Mammary epithelial cell (primary cell): ENCODE measurements at regions of chr7 and their contacts with region 1.

Region 1: GRCh38 chr7:104914421-104914820 is 99.6 kb upstream of the KMT2E start:
- DNase-seq: no peak
- H3K4me3 ChIP-seq: no peak overlapping the region
- H3K27ac ChIP-seq: no peak overlapping the region
- H3K4me1 ChIP-seq: no peaks in the 10 kb centered on the region
- H3K27me3 ChIP-seq: no peaks in the 10 kb centered on the region
- CTCF ChIP-seq: no peak

Region 2: DNA sequence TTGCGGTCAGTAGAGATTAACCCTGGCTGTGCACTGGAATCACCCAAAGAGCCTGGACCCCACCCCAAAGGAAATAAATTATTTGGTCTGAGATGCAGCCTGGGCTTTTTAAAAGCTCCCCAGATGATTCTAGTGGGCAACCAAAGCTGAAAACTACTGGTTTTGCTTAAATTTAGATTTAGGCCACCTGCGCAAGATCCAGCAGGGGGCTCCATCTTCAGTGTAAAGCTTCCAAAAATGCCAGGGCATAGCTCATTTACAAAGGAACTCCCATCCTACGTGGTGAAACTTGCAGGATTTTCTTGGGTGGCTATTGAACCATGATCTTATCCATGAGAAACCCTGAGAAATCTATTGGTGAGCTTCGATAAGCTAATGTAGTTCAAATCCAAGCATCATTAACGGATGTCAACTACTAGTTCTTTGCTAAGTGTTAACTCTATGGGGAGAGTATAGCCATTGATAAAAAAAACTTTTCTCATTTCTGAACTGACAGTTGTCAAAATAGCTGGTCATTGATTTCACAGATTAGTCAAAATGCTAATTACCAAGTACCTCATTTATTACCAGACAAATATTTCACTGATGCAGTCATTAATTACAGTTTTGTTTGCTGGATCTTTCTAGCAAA is 270.7 kb before region 1 on chr7:
- CTCF ChIA-PET with region 1: interaction called, 3 read pairs
- dilution Hi-C with region 1: no loop called
- in situ Hi-C with region 1: no loop called
- intact Hi-C with region 1: loop called (anchors 10 kb)
- DNase-seq: peak; percentile 3
- H3K4me3 ChIP-seq: no peak overlapping the region
- H3K27ac ChIP-seq: no peak overlapping the region
- H3K4me1 ChIP-seq: no peaks in the 10 kb centered on the region
- H3K27me3 ChIP-seq: no peaks in the 10 kb centered on the region
- CTCF ChIP-seq: peak; percentile 49 to 62